ENCODE measurements at regions of chr9 and their contacts with region 1.

Region 1: GRCh38 chr9:113591001-113591898 is 127.7 kb downstream of the RGS3 start:
- DNase-seq: peak; percentile 74
- ATAC-seq: peak; percentile 46 to 57
- H3K4me3 ChIP-seq: no peak overlapping the region
- H3K27ac ChIP-seq: peak overlapping the region; percentile 65
- H3K4me1 ChIP-seq: peaks cover 78% of the 10 kb centered on the region
- H3K27me3 ChIP-seq: no peaks in the 10 kb centered on the region
- CTCF ChIP-seq: peak; percentile 90

Region 2: DNA sequence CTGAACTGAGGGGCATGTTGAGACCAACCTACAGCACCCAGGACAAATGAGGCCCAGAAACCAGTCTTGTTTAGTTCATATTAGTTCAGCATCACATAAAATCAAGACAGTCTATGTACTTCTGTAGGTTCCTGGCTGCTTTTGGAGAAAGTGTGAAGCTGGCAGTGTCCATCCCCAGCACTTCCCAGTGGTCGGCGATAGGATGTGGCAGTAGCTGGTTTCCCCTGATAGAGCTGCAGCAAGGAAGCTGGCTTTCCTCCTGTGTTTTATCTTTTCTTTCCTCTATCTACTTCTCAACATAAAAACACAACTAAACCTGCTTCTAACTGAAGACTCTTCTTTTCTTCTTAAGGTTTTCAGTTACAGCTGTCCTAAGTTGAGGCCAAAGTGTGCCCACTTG is 657.6 kb before region 1 on chr9:
- intact Hi-C with region 1: no loop called
- DNase-seq: no peak
- ATAC-seq: no peak
- H3K4me3 ChIP-seq: no peak overlapping the region
- H3K27ac ChIP-seq: no peak overlapping the region
- H3K4me1 ChIP-seq: no peaks in the 10 kb centered on the region
- H3K27me3 ChIP-seq: peaks cover 9% of the 10 kb centered on the region
- CTCF ChIP-seq: no peak

Region 3: GRCh38 chr9:113657703-113658544 is 66.7 kb after region 1 on chr9:
- intact Hi-C with region 1: loop called (anchors 5 kb)
- DNase-seq: peak; percentile 86
- ATAC-seq: peak; percentile 88 to 90
- H3K4me3 ChIP-seq: no peak overlapping the region
- H3K27ac ChIP-seq: no peak overlapping the region
- H3K4me1 ChIP-seq: peaks cover 36% of the 10 kb centered on the region
- H3K27me3 ChIP-seq: no peaks in the 10 kb centered on the region
- CTCF ChIP-seq: peak; percentile 95

Measured in lower lobe of right lung (tissue), 2 donors.